CD4-positive, alpha-beta memory T cell (primary cell): ENCODE measurements at regions of chrX and their contacts with region 1.

Region 1: GRCh38 chrX:150486011-150486410 is 82.4 kb upstream of the MTM1 start:
- DNase-seq: peak; percentile 41 to 49 (median 45)
- H3K4me3 ChIP-seq: no peak overlapping the region
- H3K4me3 Mint-ChIP-seq: no peak overlapping the region
- H3K27ac ChIP-seq: no peak overlapping the region
- H3K27ac Mint-ChIP-seq: no peak overlapping the region
- H3K4me1 ChIP-seq: peaks cover 17% of the 10 kb centered on the region
- H3K4me1 Mint-ChIP-seq: peaks cover 0 to 14% (median 6%) of the 10 kb centered on the region in 4 donors
- H3K27me3 ChIP-seq: no peaks in the 10 kb centered on the region
- H3K27me3 Mint-ChIP-seq: no peaks in the 10 kb centered on the region

Region 2: GRCh38 chrX:150449313-150449712 is 36.7 kb before region 1 on chrX:
- CTCF ChIA-PET with region 1: interaction called, 13 read pairs
- POLR2A ChIA-PET with region 1: no interaction called
- intact Hi-C with region 1: no loop called
- DNase-seq: no peak
- H3K4me3 ChIP-seq: no peak overlapping the region
- H3K4me3 Mint-ChIP-seq: no peak overlapping the region
- H3K27ac ChIP-seq: no peak overlapping the region
- H3K27ac Mint-ChIP-seq: no peak overlapping the region
- H3K4me1 ChIP-seq: peaks cover 16% of the 10 kb centered on the region
- H3K4me1 Mint-ChIP-seq: peaks cover 7 to 21% (median 12%) of the 10 kb centered on the region in 4 donors
- H3K27me3 ChIP-seq: no peaks in the 10 kb centered on the region
- H3K27me3 Mint-ChIP-seq: no peaks in the 10 kb centered on the region

Region 3: DNA sequence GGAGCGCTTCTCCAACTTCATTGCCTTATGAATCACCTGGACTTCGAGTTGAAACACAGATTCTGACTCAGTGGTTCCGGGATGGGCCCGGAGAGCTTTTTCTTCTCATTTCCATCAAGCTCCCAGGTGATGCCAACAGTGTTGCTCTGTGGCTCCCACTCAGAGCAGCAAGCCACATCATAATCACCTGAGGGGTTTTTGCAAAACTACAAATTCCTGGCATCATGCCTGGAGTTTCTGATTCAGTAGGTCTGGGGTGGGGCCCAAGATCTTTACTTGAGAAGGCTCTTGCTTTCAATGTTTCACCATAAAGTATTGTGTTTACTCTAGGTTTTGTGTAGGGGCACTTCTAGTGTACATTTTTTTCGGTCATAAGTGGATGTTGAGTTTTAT is 89.4 kb after region 1 on chrX:
- CTCF ChIA-PET with region 1: interaction called, 6 read pairs
- POLR2A ChIA-PET with region 1: no interaction called
- intact Hi-C with region 1: loop called (anchors 5 kb)
- DNase-seq: peak in 4 of 5 donors; percentile 30 to 85 (median 46)
- H3K4me3 ChIP-seq: peak overlapping the region; percentile 41 to 57
- H3K4me3 Mint-ChIP-seq: peak overlapping the region; percentile 78 to 90 (median 84)
- H3K27ac ChIP-seq: peak overlapping the region; percentile 78
- H3K27ac Mint-ChIP-seq: peak overlapping the region; percentile 86 to 100 (median 92)
- H3K4me1 ChIP-seq: peaks cover 88% of the 10 kb centered on the region
- H3K4me1 Mint-ChIP-seq: peaks cover 72 to 90% (median 78%) of the 10 kb centered on the region in 4 donors
- H3K27me3 ChIP-seq: no peaks in the 10 kb centered on the region
- H3K27me3 Mint-ChIP-seq: no peaks in the 10 kb centered on the region

Region 4: GRCh38 chrX:150649096-150649870 is 163.3 kb after region 1 on chrX:
- CTCF ChIA-PET with region 1: no interaction called
- POLR2A ChIA-PET with region 1: no interaction called
- intact Hi-C with region 1: no loop called
- DNase-seq: no peak
- H3K4me3 ChIP-seq: no peak overlapping the region
- H3K4me3 Mint-ChIP-seq: no peak overlapping the region
- H3K27ac ChIP-seq: no peak overlapping the region
- H3K27ac Mint-ChIP-seq: peak overlapping the region in 4 of 7 donors; percentile 3 to 60 (median 49)
- H3K4me1 ChIP-seq: no peaks in the 10 kb centered on the region
- H3K4me1 Mint-ChIP-seq: peaks cover 0 to 6% (median 4%) of the 10 kb centered on the region in 4 donors
- H3K27me3 ChIP-seq: no peaks in the 10 kb centered on the region
- H3K27me3 Mint-ChIP-seq: no peaks in the 10 kb centered on the region

Region 5: GRCh38 chrX:150926304-150926703 is 440.3 kb after region 1 on chrX:
- CTCF ChIA-PET with region 1: no interaction called
- POLR2A ChIA-PET with region 1: no interaction called
- intact Hi-C with region 1: no loop called
- DNase-seq: no peak
- H3K4me3 ChIP-seq: no peak overlapping the region
- H3K4me3 Mint-ChIP-seq: no peak overlapping the region
- H3K27ac ChIP-seq: no peak overlapping the region
- H3K27ac Mint-ChIP-seq: no peak overlapping the region
- H3K4me1 ChIP-seq: no peaks in the 10 kb centered on the region
- H3K4me1 Mint-ChIP-seq: no peaks in the 10 kb centered on the region
- H3K27me3 ChIP-seq: no peaks in the 10 kb centered on the region
- H3K27me3 Mint-ChIP-seq: no peaks in the 10 kb centered on the region